ENCODE measurements at regions of chr12 and their contacts with region 1.

Region 1: GRCh38 chr12:28190321-28191050 is at the start of gene CCDC91:
- DNase-seq: peak; percentile 88
- H3K4me3 Mint-ChIP-seq: peak within 1 kb of the TSS; percentile 93
- H3K27ac Mint-ChIP-seq: peak within 1 kb of the TSS; percentile 97
- H3K4me1 Mint-ChIP-seq: peaks cover 29% of the 10 kb centered on the region
- H3K27me3 Mint-ChIP-seq: no peaks in the 10 kb centered on the region
- total RNA-seq, gene CCDC91: 23.1 to 24.6 TPM

Region 2: DNA sequence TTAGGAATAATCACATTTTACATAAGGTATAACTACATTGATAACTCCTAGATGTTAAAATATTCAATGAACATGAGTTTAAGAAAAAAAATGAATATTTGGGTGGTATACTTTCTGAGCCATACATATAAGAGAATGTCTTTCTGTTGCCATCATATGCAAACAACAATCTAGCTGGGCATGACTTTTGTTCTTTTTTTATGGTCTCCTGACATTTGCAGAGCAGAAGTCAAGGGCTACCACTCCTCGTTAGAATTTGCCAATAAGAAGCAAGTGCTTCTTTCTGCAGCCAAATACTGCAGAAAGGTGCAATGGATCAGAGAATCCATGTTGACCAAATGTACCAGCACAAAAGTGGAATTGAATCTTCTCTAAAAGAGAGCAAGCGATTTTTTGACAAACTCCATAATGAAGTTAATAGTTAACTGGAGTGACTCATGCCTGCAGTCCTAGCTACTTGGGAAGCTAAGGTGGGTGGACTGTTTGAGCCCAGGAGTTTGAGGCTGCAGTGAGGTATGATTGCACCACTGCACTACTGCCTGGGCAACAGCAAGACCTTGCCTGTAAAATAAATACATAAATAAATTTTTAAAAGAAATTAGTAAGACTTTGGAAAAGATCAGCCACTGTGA is 25.7 kb before region 1 on chr12:
- CTCF ChIA-PET with region 1: no interaction called
- POLR2A ChIA-PET with region 1: no interaction called
- DNase-seq: no peak
- H3K4me3 Mint-ChIP-seq: no peak overlapping the region
- H3K27ac Mint-ChIP-seq: no peak overlapping the region
- H3K4me1 Mint-ChIP-seq: no peaks in the 10 kb centered on the region
- H3K27me3 Mint-ChIP-seq: no peaks in the 10 kb centered on the region

Region 3: GRCh38 chr12:28177461-28177860 is 13.0 kb before region 1 on chr12:
- CTCF ChIA-PET with region 1: no interaction called
- POLR2A ChIA-PET with region 1: interaction called, 10 read pairs
- DNase-seq: no peak
- H3K4me3 Mint-ChIP-seq: no peak overlapping the region
- H3K27ac Mint-ChIP-seq: no peak overlapping the region
- H3K4me1 Mint-ChIP-seq: no peaks in the 10 kb centered on the region
- H3K27me3 Mint-ChIP-seq: no peaks in the 10 kb centered on the region

Region 4: DNA sequence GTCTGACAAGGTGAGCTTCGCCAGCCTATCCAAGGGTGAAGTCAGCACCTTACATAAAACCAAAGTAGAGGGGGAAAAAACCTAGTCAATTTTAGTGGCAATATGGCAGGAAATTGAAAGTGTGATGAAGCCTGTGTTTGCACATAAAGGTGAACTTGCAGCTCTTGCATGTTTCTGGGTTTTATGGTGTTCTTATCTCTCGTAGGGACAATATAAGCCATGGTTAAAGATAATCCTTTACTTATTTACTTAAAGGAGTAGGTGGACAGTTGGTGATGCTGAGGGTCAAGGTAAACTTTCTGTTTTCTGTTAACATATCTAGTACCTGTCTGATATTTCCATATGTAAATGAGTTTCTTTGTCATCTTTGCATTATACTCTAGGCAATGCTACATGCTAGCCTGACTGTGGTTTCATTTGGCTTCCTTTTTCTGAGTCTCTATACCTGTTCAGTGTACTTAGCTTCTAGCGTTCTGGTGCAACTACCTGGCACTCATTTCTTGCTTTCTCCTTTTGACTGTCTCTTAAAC is 32.6 kb after region 1 on chr12:
- CTCF ChIA-PET with region 1: interaction called, 4 read pairs
- POLR2A ChIA-PET with region 1: interaction called, 27 read pairs
- DNase-seq: no peak
- H3K4me3 Mint-ChIP-seq: peak overlapping the region; percentile 51
- H3K27ac Mint-ChIP-seq: peak overlapping the region; percentile 59
- H3K4me1 Mint-ChIP-seq: peaks cover 40% of the 10 kb centered on the region
- H3K27me3 Mint-ChIP-seq: peaks cover 5% of the 10 kb centered on the region

Region 5: GRCh38 chr12:28253161-28253641 is 62.7 kb after region 1 on chr12:
- CTCF ChIA-PET with region 1: no interaction called
- POLR2A ChIA-PET with region 1: interaction called, 10 read pairs
- DNase-seq: peak; percentile 33
- H3K4me3 Mint-ChIP-seq: peak overlapping the region; percentile 67
- H3K27ac Mint-ChIP-seq: peak overlapping the region; percentile 82
- H3K4me1 Mint-ChIP-seq: peaks cover 47% of the 10 kb centered on the region
- H3K27me3 Mint-ChIP-seq: no peaks in the 10 kb centered on the region

Measured in activated CD4-positive, alpha-beta memory T cell treated with anti-CD3 and anti-CD28 coated beads, Interleukin-2, amount 10 ng/mL, durations not matched to agents 7 days and 5 days (primary cell).